Posterior vena cava (tissue), 2 donors: ENCODE measurements at regions of chr22 and their contacts with region 1.

Region 1: GRCh38 chr22:37353839-37354238 is 71.5 kb downstream of the CYTH4 start:
- DNase-seq: no peak

Region 2: DNA sequence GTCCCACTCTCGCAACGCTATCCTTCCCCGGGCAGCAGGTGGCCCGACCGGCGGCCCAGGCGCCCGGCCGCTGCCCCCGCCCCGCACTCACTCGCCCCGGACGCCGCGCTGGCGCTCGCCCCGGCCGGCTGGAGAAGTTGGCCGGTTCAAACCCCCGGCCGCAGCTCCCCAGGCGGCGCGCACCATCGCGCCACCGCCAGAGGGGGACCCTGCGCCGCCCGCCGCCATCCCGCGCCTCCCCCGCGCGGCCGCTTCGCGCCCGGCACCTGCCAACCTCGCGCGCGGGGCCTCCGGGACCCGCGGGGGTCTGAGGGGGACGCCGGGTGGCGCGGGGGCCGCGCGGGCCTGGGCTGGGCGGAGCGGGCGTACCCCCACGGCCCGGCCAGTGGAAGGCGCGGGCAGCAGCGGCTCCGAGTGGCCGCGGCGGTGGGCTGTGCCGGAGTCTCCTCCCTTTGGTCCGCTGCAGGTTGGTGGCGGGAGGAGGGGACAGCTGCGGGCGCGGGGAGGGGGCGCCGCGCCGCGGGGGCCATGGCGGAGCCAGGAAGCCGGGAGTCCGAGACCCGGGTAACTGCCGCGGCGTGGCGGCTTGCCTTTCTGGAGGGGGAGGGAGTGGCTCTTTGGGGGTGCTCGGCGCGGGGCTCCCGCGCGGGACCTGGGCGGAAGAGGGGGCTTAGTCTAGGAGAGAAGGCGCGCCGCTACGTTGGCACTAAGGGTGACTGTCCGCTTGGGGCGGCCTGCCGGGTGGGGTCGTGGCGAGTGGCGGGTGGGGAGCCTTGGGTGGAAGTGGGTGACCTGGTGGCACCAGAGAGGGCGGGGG is 334.3 kb before region 1 on chr22 and contains the starts of genes MPST and TST:
- intact Hi-C with region 1: loop called in 1 of 2 experiments (anchors 10 kb)
- DNase-seq: peak; percentile 91
- total RNA-seq, gene MPST: 19.7 to 21.0 TPM
- total RNA-seq, gene TST: 8.9 to 9.3 TPM

Region 3: DNA sequence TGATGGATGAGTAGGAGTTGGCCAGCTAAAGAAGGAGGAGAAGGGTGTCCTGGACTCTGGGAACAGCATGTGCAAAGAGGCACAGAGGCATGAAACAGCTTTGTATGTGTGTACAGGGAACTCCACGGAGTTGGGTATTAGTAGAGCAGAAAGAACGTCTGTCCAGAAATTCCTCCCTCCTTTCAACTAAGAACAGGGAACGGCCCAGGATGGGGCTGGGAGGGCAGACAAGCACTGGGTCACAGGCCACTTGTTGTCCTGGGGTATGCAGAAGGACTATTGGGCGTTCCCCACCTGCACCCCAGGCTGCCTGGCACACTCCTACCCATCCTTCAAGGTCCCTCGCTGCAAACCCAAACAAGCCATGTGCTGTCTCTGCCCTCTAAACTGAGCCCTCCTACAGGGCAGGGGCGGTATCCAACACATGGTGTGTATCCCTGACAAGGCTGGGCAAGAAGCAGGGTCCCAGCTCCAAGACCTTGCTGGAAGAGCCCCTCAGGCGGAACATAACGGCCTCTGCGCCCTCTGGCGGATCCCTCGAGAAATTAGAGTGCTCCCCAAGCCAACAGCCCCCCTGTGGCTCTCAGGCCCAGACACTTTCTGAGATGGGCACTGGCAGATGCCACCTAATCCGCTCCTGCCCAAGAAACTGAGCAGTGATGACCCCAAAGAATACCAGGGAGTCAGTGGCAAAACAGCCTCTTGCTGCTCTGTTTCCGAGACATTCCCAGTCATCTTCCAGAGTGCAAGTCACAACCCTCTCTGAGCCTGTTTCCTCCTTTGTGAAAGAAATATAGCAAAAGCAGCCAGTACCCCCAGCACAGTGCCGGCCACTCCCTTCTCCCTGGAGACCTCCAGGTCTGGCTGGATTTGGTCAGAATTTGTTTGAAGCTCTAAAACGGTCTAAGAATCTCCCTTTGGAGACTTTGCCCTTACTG is 75.1 kb after region 1 on chr22:
- intact Hi-C with region 1: no loop called
- DNase-seq: no peak